ENCODE measurements at regions of chr1 and their contacts with region 1.

Region 1: GRCh38 chr1:187755536-187755935 is 926.8 kb downstream of the PLA2G4A start:
- DNase-seq: no peak
- H3K4me3 Mint-ChIP-seq: no peak overlapping the region
- H3K27ac Mint-ChIP-seq: no peak overlapping the region
- H3K4me1 Mint-ChIP-seq: no peaks in the 10 kb centered on the region
- H3K27me3 Mint-ChIP-seq: no peaks in the 10 kb centered on the region

Region 2: GRCh38 chr1:187537936-187538335 is 217.6 kb before region 1 on chr1:
- intact Hi-C with region 1: no loop called
- DNase-seq: no peak
- H3K4me3 Mint-ChIP-seq: no peak overlapping the region
- H3K27ac Mint-ChIP-seq: no peak overlapping the region
- H3K4me1 Mint-ChIP-seq: no peaks in the 10 kb centered on the region
- H3K27me3 Mint-ChIP-seq: no peaks in the 10 kb centered on the region

Region 3: DNA sequence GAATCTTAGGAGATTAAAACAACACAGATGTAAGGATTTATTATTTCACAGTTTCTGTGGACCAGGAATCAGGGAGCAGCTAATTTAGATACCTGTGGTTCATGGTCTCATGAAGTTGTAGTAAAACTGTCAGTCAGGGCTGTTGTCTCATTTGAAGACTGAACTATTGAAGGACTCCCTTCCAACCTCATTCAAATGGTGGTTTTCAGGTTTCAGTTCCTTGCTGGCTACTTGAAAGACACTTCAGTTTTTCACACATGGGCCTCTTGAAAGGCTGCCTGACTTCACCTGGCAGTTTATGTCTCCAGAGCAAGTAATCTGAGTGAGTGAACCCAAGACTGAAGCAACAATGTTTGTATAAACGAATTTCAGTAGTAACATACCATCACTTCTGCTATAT is 10.9 kb before region 1 on chr1:
- intact Hi-C with region 1: loop called (anchors 1 kb)
- DNase-seq: no peak
- H3K4me3 Mint-ChIP-seq: no peak overlapping the region
- H3K27ac Mint-ChIP-seq: no peak overlapping the region
- H3K4me1 Mint-ChIP-seq: no peaks in the 10 kb centered on the region
- H3K27me3 Mint-ChIP-seq: no peaks in the 10 kb centered on the region